Activated T-helper 1 cell treated with anti-CD3 and anti-CD28 coated beads, Interleukin-12 subunit alpha, Interleukin-12 subunit beta, Interleukin-2, Interleukin-4 antibody, amounts not matched to agents 30 ng/mL and 10 ng/mL and 1 ng/mL, durations not matched to agents 14 hours and 24 hours and 36 hours (primary cell): ENCODE measurements at regions of chr2 and their contacts with region 1.

Region 1: GRCh38 chr2:216849987-216850386 is 9.9 kb downstream of the TNP1 start:
- DNase-seq: peak; percentile 6
- H3K4me3 Mint-ChIP-seq: peak overlapping the region; percentile 57
- H3K27ac Mint-ChIP-seq: peak overlapping the region; percentile 68
- H3K4me1 Mint-ChIP-seq: peaks cover 21% of the 10 kb centered on the region
- H3K27me3 Mint-ChIP-seq: peaks cover 8% of the 10 kb centered on the region

Region 2: GRCh38 chr2:216866515-216867095 is 16.6 kb after region 1 on chr2:
- intact Hi-C with region 1: loop called (anchors 1 kb)
- DNase-seq: no peak
- H3K4me3 Mint-ChIP-seq: no peak overlapping the region
- H3K27ac Mint-ChIP-seq: peak overlapping the region; percentile 80
- H3K4me1 Mint-ChIP-seq: peaks cover 47% of the 10 kb centered on the region
- H3K27me3 Mint-ChIP-seq: peaks cover 2% of the 10 kb centered on the region

Region 3: GRCh38 chr2:216888907-216889622 is 39.1 kb after region 1 on chr2:
- intact Hi-C with region 1: no loop called
- DNase-seq: no peak
- H3K4me3 Mint-ChIP-seq: no peak overlapping the region
- H3K27ac Mint-ChIP-seq: no peak overlapping the region
- H3K4me1 Mint-ChIP-seq: no peaks in the 10 kb centered on the region
- H3K27me3 Mint-ChIP-seq: peaks cover 11% of the 10 kb centered on the region

Region 4: GRCh38 chr2:217166241-217166850 is 316.4 kb after region 1 on chr2:
- intact Hi-C with region 1: loop called (anchors 10 kb)
- DNase-seq: no peak
- H3K4me3 Mint-ChIP-seq: no peak overlapping the region
- H3K27ac Mint-ChIP-seq: no peak overlapping the region
- H3K4me1 Mint-ChIP-seq: peaks cover 17% of the 10 kb centered on the region
- H3K27me3 Mint-ChIP-seq: peaks cover 2% of the 10 kb centered on the region